ENCODE measurements at regions of chr7 and their contacts with region 1.

Region 1: DNA sequence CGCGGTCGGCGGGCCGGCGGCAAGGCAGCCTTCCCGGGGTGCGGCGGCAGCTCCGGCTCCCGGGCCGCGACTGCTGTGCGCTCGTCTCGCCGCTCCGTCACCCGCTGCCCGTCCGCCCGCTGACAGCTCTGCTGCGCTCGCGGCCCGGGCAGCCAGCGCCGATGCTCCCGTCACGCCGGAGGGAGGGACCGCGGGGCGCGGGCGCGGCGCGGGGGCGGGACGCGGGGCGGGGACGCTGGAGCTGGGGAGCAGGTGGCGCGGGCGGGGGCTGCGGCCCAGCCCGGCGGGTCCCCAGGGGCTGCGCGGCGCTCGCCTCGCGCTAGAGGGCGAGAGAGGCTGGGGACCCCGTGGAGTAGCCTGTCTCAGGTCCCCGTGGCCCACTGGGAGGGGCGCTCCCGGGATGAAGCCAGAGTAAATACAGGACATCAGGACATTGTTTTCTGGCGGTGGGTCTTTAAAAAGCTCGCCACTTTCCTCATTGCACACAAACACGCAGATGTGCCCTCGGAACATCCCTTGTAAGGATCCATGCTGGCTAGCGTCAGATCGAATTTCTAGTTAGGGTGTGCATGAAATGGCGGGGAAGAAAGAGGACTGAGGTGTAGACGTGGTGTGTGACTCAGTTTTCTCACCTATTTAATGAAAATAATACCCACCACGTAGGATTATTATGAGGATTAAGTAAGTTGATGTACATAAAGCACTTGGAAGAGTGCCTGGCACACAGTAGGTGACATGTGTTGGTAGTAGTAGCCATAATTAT is at the start of gene ELAPOR2:
- DNase-seq: peak; percentile 85
- ATAC-seq: peak; percentile 98
- total RNA-seq, gene ELAPOR2: 6.4 TPM

Region 2: GRCh38 chr7:86939197-86939814 is 120.4 kb before region 1 on chr7:
- intact Hi-C with region 1: loop called (anchors 5 kb)
- DNase-seq: no peak
- ATAC-seq: peak; percentile 72

Region 3: GRCh38 chr7:87003872-87004798 is 55.6 kb before region 1 on chr7:
- intact Hi-C with region 1: loop called (anchors 10 kb)
- DNase-seq: no peak
- ATAC-seq: no peak

Region 4: DNA sequence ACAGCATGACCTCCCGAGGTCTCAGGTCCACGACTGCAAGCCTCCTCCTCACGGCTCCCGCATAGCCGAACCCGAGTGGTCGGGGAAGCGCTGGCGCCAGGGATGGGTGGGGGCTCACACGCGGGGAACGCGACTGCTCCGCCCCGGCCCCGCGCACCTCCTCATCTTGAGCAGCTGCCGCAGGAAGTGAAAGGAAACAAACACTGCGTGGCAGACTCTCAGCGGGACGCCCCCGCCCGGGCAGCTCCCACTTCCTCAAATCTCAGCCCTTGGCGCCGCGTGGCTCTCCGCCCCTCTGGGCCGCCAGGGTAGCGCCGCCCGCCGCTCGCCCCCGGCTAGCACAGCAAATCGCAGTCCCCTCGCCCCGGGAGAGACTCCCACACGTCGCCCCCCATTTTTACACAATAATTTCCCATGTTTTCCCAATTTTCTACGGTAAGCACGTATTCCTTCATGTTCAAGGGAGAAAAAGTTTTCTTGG is 159.9 kb after region 1 on chr7 and contains the start of gene TMEM243:
- intact Hi-C with region 1: loop called (anchors 10 kb)
- DNase-seq: peak; percentile 92
- ATAC-seq: peak; percentile 91
- total RNA-seq, gene TMEM243: 5.9 TPM

Region 5: GRCh38 chr7:87599336-87599735 is 539.6 kb after region 1 on chr7:
- intact Hi-C with region 1: no loop called
- DNase-seq: no peak
- ATAC-seq: no peak